Naive thymus-derived CD4-positive, alpha-beta T cell (primary cell): ENCODE measurements at regions of chr2 and their contacts with region 1.

Region 1: GRCh38 chr2:39436592-39437510 is at the start of gene MAP4K3:
- DNase-seq: peak; percentile 46 to 84 (median 54)
- ATAC-seq: peak; percentile 79
- H3K4me3 ChIP-seq: peak within 1 kb of the TSS; percentile 76
- H3K4me3 Mint-ChIP-seq: peak within 1 kb of the TSS; percentile 67 to 97 (median 91)
- H3K27ac ChIP-seq: peak within 1 kb of the TSS; percentile 64
- H3K27ac Mint-ChIP-seq: peak within 1 kb of the TSS; percentile 47 to 96 (median 87)
- H3K4me1 ChIP-seq: peaks cover 9 to 30% of the 10 kb centered on the region in 2 donors
- H3K4me1 Mint-ChIP-seq: peaks cover 35 to 57% (median 54%) of the 10 kb centered on the region in 7 donors
- H3K27me3 ChIP-seq: no peaks in the 10 kb centered on the region
- H3K27me3 Mint-ChIP-seq: no peaks in the 10 kb centered on the region
- total RNA-seq, gene MAP4K3: 14.4 to 32.2 (median 19.9) TPM

Region 2: GRCh38 chr2:38875576-38876367 is 561.1 kb before region 1 on chr2 and contains the starts of genes DHX57 and MORN2:
- CTCF ChIA-PET with region 1: no interaction called
- POLR2A ChIA-PET with region 1: no interaction called
- intact Hi-C with region 1: loop called in 1 of 2 experiments (anchors 10 kb)
- DNase-seq: peak; percentile 64 to 83 (median 79)
- ATAC-seq: peak; percentile 98
- H3K4me3 ChIP-seq: peak within 1 kb of the TSS; percentile 91
- H3K4me3 Mint-ChIP-seq: peak within 1 kb of the TSS; percentile 94 to 100 (median 96)
- H3K27ac ChIP-seq: peak within 1 kb of the TSS; percentile 69
- H3K27ac Mint-ChIP-seq: peak within 1 kb of the TSS; percentile 82 to 99 (median 95)
- H3K4me1 ChIP-seq: peaks cover 11 to 14% of the 10 kb centered on the region in 2 donors
- H3K4me1 Mint-ChIP-seq: peaks cover 13 to 48% (median 32%) of the 10 kb centered on the region in 7 donors
- H3K27me3 ChIP-seq: no peaks in the 10 kb centered on the region
- H3K27me3 Mint-ChIP-seq: no peaks in the 10 kb centered on the region
- total RNA-seq, gene DHX57: 12.9 to 19.8 (median 18.9) TPM
- total RNA-seq, gene MORN2: 1.5 to 2.7 (median 2.1) TPM

Region 3: GRCh38 chr2:39243476-39244123 is 193.3 kb before region 1 on chr2 and contains the start of gene CDKL4:
- CTCF ChIA-PET with region 1: no interaction called
- POLR2A ChIA-PET with region 1: no interaction called
- intact Hi-C with region 1: loop called in 1 of 2 experiments (anchors 5 kb)
- DNase-seq: peak in 7 of 9 donors; percentile 24 to 56 (median 43)
- ATAC-seq: peak; percentile 75
- H3K4me3 ChIP-seq: peak within 1 kb of the TSS; percentile 56
- H3K4me3 Mint-ChIP-seq: peak within 1 kb of the TSS; percentile 80 to 92 (median 87)
- H3K27ac ChIP-seq: no peak within 1 kb of the TSS
- H3K27ac Mint-ChIP-seq: peak within 1 kb of the TSS in 8 of 9 donors; percentile 50 to 88 (median 70)
- H3K4me1 ChIP-seq: no peaks in the 10 kb centered on the region
- H3K4me1 Mint-ChIP-seq: peaks cover 0 to 31% (median 21%) of the 10 kb centered on the region in 7 donors
- H3K27me3 ChIP-seq: no peaks in the 10 kb centered on the region
- H3K27me3 Mint-ChIP-seq: no peaks in the 10 kb centered on the region
- total RNA-seq, gene CDKL4: 0.82 TPM in 1 of 5 experiments, not detected in the others

Region 4: DNA sequence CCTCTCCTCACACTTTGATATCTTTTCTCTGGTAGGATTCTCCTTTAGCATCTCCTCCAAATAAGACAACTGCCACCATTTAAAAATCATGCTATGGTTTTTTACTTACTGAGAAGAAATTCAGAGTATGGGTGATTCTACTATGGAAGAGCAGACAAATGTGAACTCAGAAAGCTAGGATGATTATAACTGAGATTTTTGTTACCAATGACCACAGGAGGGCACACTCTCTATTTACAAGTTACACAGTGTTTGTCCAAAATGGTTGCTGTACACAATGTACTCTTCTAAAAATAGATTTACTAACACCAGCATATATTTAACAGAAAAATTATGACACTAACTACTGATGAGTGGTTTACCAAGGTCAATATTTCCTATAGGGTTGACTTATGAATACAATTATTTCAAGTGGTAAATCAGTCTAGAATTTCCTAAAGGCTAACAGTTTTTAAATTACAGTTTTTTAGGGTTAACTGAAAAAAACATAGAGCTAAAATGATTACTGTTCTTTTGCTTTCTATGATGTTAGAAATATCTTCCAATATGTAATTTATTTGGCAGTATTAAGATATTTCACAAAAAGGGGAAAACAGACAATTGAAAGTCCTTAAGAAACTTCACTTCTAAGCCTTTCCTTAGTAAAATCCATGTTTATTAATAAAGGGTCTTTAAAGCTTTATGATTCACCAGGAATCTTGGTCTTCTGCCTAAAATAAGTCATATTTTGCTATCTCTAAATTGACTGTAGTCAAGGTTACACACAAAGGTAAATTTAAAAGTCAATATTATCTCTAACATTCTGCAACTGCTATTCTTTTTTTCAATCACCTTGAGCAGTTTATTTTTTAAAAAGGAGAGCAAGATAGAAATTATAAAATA is 57.0 kb before region 1 on chr2:
- CTCF ChIA-PET with region 1: interaction called, 3 read pairs
- POLR2A ChIA-PET with region 1: no interaction called
- intact Hi-C with region 1: loop called (anchors 2 to 5 kb)
- DNase-seq: peak in 5 of 9 donors; percentile 12 to 22 (median 18)
- ATAC-seq: peak; percentile 72
- H3K4me3 ChIP-seq: no peak overlapping the region
- H3K4me3 Mint-ChIP-seq: no peak overlapping the region
- H3K27ac ChIP-seq: no peak overlapping the region
- H3K27ac Mint-ChIP-seq: no peak overlapping the region
- H3K4me1 ChIP-seq: peaks cover 0 to 6% of the 10 kb centered on the region in 2 donors
- H3K4me1 Mint-ChIP-seq: peaks cover 7 to 36% (median 25%) of the 10 kb centered on the region in 7 donors
- H3K27me3 ChIP-seq: no peaks in the 10 kb centered on the region
- H3K27me3 Mint-ChIP-seq: no peaks in the 10 kb centered on the region

Region 5: GRCh38 chr2:39419282-39420223 is 17.3 kb before region 1 on chr2:
- CTCF ChIA-PET with region 1: no interaction called
- POLR2A ChIA-PET with region 1: no interaction called
- intact Hi-C with region 1: loop called in 1 of 2 experiments (anchors 2 kb)
- DNase-seq: no peak
- ATAC-seq: no peak
- H3K4me3 ChIP-seq: no peak overlapping the region
- H3K4me3 Mint-ChIP-seq: no peak overlapping the region
- H3K27ac ChIP-seq: no peak overlapping the region
- H3K27ac Mint-ChIP-seq: no peak overlapping the region
- H3K4me1 ChIP-seq: peaks cover 0 to 6% of the 10 kb centered on the region in 2 donors
- H3K4me1 Mint-ChIP-seq: peaks cover 9 to 56% (median 40%) of the 10 kb centered on the region in 7 donors
- H3K27me3 ChIP-seq: no peaks in the 10 kb centered on the region
- H3K27me3 Mint-ChIP-seq: no peaks in the 10 kb centered on the region

Region 6: GRCh38 chr2:39492095-39492590 is 55.3 kb after region 1 on chr2:
- CTCF ChIA-PET with region 1: no interaction called
- POLR2A ChIA-PET with region 1: no interaction called
- intact Hi-C with region 1: loop called in 1 of 2 experiments (anchors 2 kb)
- DNase-seq: no peak
- ATAC-seq: peak; percentile 90
- H3K4me3 ChIP-seq: no peak overlapping the region
- H3K4me3 Mint-ChIP-seq: peak overlapping the region in 1 of 10 donors; percentile 45
- H3K27ac ChIP-seq: no peak overlapping the region
- H3K27ac Mint-ChIP-seq: peak overlapping the region in 1 of 9 donors; percentile 66
- H3K4me1 ChIP-seq: no peaks in the 10 kb centered on the region
- H3K4me1 Mint-ChIP-seq: peaks cover 0 to 25% (median 0%) of the 10 kb centered on the region in 7 donors
- H3K27me3 ChIP-seq: no peaks in the 10 kb centered on the region
- H3K27me3 Mint-ChIP-seq: peaks cover 0 to 4% (median 0%) of the 10 kb centered on the region in 5 donors

Region 7: GRCh38 chr2:39778962-39779851 is 342.4 kb after region 1 on chr2 and contains the start of gene THUMPD2:
- CTCF ChIA-PET with region 1: interaction called, 3 read pairs
- POLR2A ChIA-PET with region 1: no interaction called
- intact Hi-C with region 1: loop called (anchors 2 kb)
- DNase-seq: peak; percentile 9 to 74 (median 57)
- ATAC-seq: peak; percentile 86
- H3K4me3 ChIP-seq: peak within 1 kb of the TSS; percentile 51
- H3K4me3 Mint-ChIP-seq: peak within 1 kb of the TSS; percentile 87 to 97 (median 94)
- H3K27ac ChIP-seq: peak within 1 kb of the TSS; percentile 77
- H3K27ac Mint-ChIP-seq: peak within 1 kb of the TSS; percentile 90 to 96 (median 93)
- H3K4me1 ChIP-seq: peaks cover 13 to 24% of the 10 kb centered on the region in 2 donors
- H3K4me1 Mint-ChIP-seq: peaks cover 31 to 71% (median 58%) of the 10 kb centered on the region in 7 donors
- H3K27me3 ChIP-seq: no peaks in the 10 kb centered on the region
- H3K27me3 Mint-ChIP-seq: peaks cover 0 to 1% (median 0%) of the 10 kb centered on the region in 5 donors
- total RNA-seq, gene THUMPD2: 7.6 to 13.4 (median 10.8) TPM